ENCODE measurements at regions of chr4 and their contacts with region 1.

Region 1: DNA sequence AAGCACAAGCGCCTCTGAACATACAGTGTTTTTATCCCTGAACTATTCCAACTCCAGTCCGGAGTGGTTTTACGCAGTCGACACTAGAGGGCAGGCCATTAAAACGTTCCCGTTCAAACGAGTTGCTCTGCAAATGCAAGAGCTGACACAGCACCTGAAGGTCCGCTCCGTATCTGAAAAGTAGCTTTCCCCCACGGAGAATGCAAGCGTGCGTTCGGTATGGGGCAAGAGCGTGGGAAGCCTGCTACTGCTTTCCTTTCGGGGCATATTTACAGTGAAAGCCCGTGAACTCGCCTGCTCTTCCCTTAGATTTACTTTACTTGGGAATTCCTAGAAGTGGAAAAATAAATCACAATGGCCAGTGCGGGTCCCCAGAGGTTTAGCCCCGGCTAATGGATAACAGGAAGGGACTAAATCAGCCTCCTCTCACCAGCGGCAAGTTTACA is 190.8 kb downstream of the TSPAN5 start:
- DNase-seq: peak; percentile 65 to 71 (median 66)
- H3K4me3 ChIP-seq: peak overlapping the region in 1 of 2 donors; percentile 47
- H3K4me3 Mint-ChIP-seq: peak overlapping the region; percentile 64 to 86 (median 79)
- H3K27ac ChIP-seq: no peak overlapping the region
- H3K27ac Mint-ChIP-seq: peak overlapping the region in 4 of 7 donors; percentile 27 to 74 (median 43)
- H3K4me1 ChIP-seq: peaks cover 19% of the 10 kb centered on the region
- H3K4me1 Mint-ChIP-seq: peaks cover 15 to 32% (median 24%) of the 10 kb centered on the region in 4 donors
- H3K27me3 ChIP-seq: no peaks in the 10 kb centered on the region
- H3K27me3 Mint-ChIP-seq: no peaks in the 10 kb centered on the region

Region 2: GRCh38 chr4:98150092-98150761 is 317.4 kb before region 1 on chr4:
- CTCF ChIA-PET with region 1: interaction called, 12 read pairs
- POLR2A ChIA-PET with region 1: no interaction called
- intact Hi-C with region 1: loop called (anchors 5 kb)
- DNase-seq: peak in 1 of 5 donors; percentile 3
- H3K4me3 ChIP-seq: no peak overlapping the region
- H3K4me3 Mint-ChIP-seq: no peak overlapping the region
- H3K27ac ChIP-seq: no peak overlapping the region
- H3K27ac Mint-ChIP-seq: no peak overlapping the region
- H3K4me1 ChIP-seq: peaks cover 16% of the 10 kb centered on the region
- H3K4me1 Mint-ChIP-seq: peaks cover 5 to 18% (median 9%) of the 10 kb centered on the region in 4 donors
- H3K27me3 ChIP-seq: no peaks in the 10 kb centered on the region
- H3K27me3 Mint-ChIP-seq: peaks cover 0 to 1% of the 10 kb centered on the region in 2 donors

Region 3: GRCh38 chr4:98452091-98452490 is 15.6 kb before region 1 on chr4:
- CTCF ChIA-PET with region 1: interaction called, 13 read pairs
- POLR2A ChIA-PET with region 1: interaction called, 4 read pairs
- intact Hi-C with region 1: no loop called
- DNase-seq: no peak
- H3K4me3 ChIP-seq: no peak overlapping the region
- H3K4me3 Mint-ChIP-seq: no peak overlapping the region
- H3K27ac ChIP-seq: no peak overlapping the region
- H3K27ac Mint-ChIP-seq: no peak overlapping the region
- H3K4me1 ChIP-seq: peaks cover 29% of the 10 kb centered on the region
- H3K4me1 Mint-ChIP-seq: peaks cover 28 to 45% (median 37%) of the 10 kb centered on the region in 4 donors
- H3K27me3 ChIP-seq: no peaks in the 10 kb centered on the region
- H3K27me3 Mint-ChIP-seq: no peaks in the 10 kb centered on the region

Region 4: GRCh38 chr4:98728433-98728832 is 260.8 kb after region 1 on chr4:
- CTCF ChIA-PET with region 1: interaction called, 8 read pairs
- POLR2A ChIA-PET with region 1: no interaction called
- intact Hi-C with region 1: loop called (anchors 1 kb)
- DNase-seq: no peak
- H3K4me3 ChIP-seq: no peak overlapping the region
- H3K4me3 Mint-ChIP-seq: peak overlapping the region in 1 of 8 donors; percentile 14
- H3K27ac ChIP-seq: no peak overlapping the region
- H3K27ac Mint-ChIP-seq: peak overlapping the region in 4 of 7 donors; percentile 15 to 60 (median 29)
- H3K4me1 ChIP-seq: peaks cover 6% of the 10 kb centered on the region
- H3K4me1 Mint-ChIP-seq: peaks cover 5 to 7% (median 6%) of the 10 kb centered on the region in 4 donors
- H3K27me3 ChIP-seq: no peaks in the 10 kb centered on the region
- H3K27me3 Mint-ChIP-seq: no peaks in the 10 kb centered on the region

Region 5: GRCh38 chr4:98928505-98929340 is 461.1 kb after region 1 on chr4 and contains the start of gene EIF4E:
- CTCF ChIA-PET with region 1: interaction called, 7 read pairs
- POLR2A ChIA-PET with region 1: interaction called, 5 read pairs
- intact Hi-C with region 1: loop called (anchors 5 kb)
- DNase-seq: peak; percentile 97 to 99 (median 98)
- H3K4me3 ChIP-seq: peak within 1 kb of the TSS; percentile 66 to 97
- H3K4me3 Mint-ChIP-seq: peak within 1 kb of the TSS; percentile 92 to 100 (median 98)
- H3K27ac ChIP-seq: peak within 1 kb of the TSS; percentile 82
- H3K27ac Mint-ChIP-seq: peak within 1 kb of the TSS; percentile 94 to 99 (median 98)
- H3K4me1 ChIP-seq: peaks cover 33% of the 10 kb centered on the region
- H3K4me1 Mint-ChIP-seq: peaks cover 17 to 58% (median 30%) of the 10 kb centered on the region in 4 donors
- H3K27me3 ChIP-seq: no peaks in the 10 kb centered on the region
- H3K27me3 Mint-ChIP-seq: peaks cover 0 to 2% of the 10 kb centered on the region in 2 donors
- total RNA-seq, gene EIF4E: 58.2 to 62.5 TPM